ENCODE measurements at regions of chr14 and their contacts with region 1.

Region 1: GRCh38 chr14:96424109-96424989 is 32.4 kb downstream of the AK7 start:
- DNase-seq: peak; percentile 31 to 41
- ATAC-seq: peak; percentile 66 to 87 (median 79)
- H3K4me3 ChIP-seq: peak overlapping the region; percentile 28 to 57 (median 50)
- H3K27ac ChIP-seq: no peak overlapping the region
- H3K4me1 ChIP-seq: peaks cover 0 to 9% (median 5%) of the 10 kb centered on the region in 9 donors
- H3K27me3 ChIP-seq: peaks cover 0 to 8% (median 0%) of the 10 kb centered on the region in 7 donors
- CTCF ChIP-seq: peak; percentile 72 to 86 (median 81)

Region 2: DNA sequence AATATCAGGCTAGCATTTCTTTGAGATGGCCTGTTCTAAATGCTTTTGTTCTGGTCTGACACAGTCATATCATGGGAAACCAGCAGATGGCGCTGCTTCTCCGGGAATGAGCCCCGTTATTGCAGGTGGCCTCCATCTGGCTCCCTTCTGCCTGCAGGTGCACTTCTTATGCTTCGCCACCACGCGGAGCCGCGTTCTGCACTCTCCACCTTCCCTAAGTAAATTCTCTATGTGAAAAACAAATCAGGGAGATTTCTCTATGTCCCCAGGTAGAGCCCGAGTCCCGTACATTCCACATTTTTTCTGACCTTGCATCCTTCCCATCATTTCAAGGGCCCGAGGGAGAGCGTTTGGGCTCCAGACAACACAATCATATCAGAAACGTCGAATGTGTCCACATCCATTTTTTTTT is 863.3 kb before region 1 on chr14:
- intact Hi-C with region 1: loop called in 1 of 10 experiments (anchors 10 kb)
- DNase-seq: peak; percentile 75 to 79
- ATAC-seq: peak; percentile 85 to 90 (median 87)
- H3K4me3 ChIP-seq: no peak overlapping the region
- H3K27ac ChIP-seq: no peak overlapping the region
- H3K4me1 ChIP-seq: peaks cover 0 to 4% (median 0%) of the 10 kb centered on the region in 9 donors
- H3K27me3 ChIP-seq: peaks cover 0 to 6% (median 0%) of the 10 kb centered on the region in 7 donors
- CTCF ChIP-seq: peak; percentile 75 to 94 (median 93)

Region 3: DNA sequence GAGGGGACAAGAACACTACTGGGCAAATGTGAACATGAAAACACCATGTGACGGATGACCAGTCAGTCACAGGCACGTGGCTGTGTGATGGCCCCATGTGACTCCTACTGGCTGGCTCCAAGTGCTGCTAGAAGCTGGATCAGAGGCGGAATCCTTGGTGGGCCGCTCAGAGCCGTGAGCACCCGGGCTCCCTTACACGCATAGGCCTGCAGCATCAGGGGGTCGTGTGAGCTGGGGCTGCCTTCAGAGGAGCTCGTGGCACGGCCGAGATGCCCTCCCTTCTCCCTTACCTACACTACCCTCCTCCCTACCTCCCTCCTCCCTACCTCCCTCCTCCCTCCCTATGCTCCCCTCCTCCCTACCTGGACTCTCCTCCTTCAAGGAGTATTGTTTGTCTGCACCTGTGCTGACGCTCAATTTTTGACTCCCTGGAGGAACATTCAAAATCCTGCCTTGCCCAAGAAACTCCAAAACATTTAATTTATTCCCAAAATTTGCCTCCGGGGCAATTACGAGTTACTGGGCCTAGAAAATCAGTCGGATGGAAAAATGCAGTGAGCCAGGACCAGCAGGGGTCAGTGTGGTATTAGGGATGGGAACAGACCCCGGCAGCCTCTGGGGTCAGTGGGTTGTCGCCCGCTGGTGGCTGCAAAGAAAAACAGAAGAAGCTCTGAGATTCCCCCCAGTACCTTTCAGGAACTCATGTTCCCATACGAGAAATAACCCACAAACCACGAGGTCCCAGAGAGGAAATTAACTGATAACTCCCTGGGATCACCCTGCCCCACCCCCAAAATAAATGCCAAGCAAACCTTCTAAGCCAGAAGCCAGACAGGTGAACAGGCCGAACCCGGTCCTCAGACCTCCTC is 324.0 kb before region 1 on chr14:
- intact Hi-C with region 1: loop called in 6 of 10 experiments (anchors 2 to 10 kb)
- DNase-seq: peak; percentile 54 to 73
- ATAC-seq: peak in 5 of 8 donors; percentile 42 to 76 (median 67)
- H3K4me3 ChIP-seq: no peak overlapping the region
- H3K27ac ChIP-seq: no peak overlapping the region
- H3K4me1 ChIP-seq: peaks cover 0 to 3% (median 0%) of the 10 kb centered on the region in 9 donors
- H3K27me3 ChIP-seq: peaks cover 0 to 32% (median 26%) of the 10 kb centered on the region in 7 donors
- CTCF ChIP-seq: peak; percentile 46 to 91 (median 80)

Region 4: GRCh38 chr14:96297000-96297399 is 127.3 kb before region 1 on chr14:
- intact Hi-C with region 1: loop called in 9 of 10 experiments (anchors 2 to 10 kb)
- DNase-seq: no peak
- ATAC-seq: no peak
- H3K4me3 ChIP-seq: no peak overlapping the region
- H3K27ac ChIP-seq: no peak overlapping the region
- H3K4me1 ChIP-seq: no peaks in the 10 kb centered on the region
- H3K27me3 ChIP-seq: no peaks in the 10 kb centered on the region
- CTCF ChIP-seq: peak; percentile 14 to 68 (median 57)

Region 5: DNA sequence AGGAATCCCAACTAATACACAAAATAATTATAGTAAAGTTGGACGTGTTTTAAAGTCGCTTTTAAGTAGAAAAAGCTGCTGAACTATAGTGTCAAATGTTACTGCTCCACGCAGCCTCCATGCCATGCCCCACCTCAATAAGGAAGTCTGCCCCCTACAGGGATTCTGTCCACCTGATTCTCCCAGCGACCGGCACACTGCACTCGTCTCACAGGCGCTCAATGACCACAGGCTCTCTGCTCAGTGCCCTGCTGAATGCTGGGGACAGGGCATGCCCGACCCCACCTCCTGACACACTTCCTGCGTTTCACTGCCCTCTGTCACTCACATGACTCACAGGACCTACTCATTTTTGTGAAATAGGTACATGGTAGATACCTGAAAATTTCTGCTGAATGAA is 119.4 kb before region 1 on chr14:
- intact Hi-C with region 1: loop called in 2 of 10 experiments (anchors 5 kb)
- DNase-seq: no peak
- ATAC-seq: no peak
- H3K4me3 ChIP-seq: no peak overlapping the region
- H3K27ac ChIP-seq: no peak overlapping the region
- H3K4me1 ChIP-seq: no peaks in the 10 kb centered on the region
- H3K27me3 ChIP-seq: no peaks in the 10 kb centered on the region
- CTCF ChIP-seq: peak in 1 of 9 donors; percentile 15

Region 6: GRCh38 chr14:96362965-96363756 is 61.2 kb before region 1 on chr14 and contains the starts of genes ATG2B and GSKIP:
- intact Hi-C with region 1: loop called in 2 of 10 experiments (anchors 2 to 5 kb)
- DNase-seq: peak; percentile 94 to 97
- ATAC-seq: peak; percentile 99
- H3K4me3 ChIP-seq: peak within 1 kb of the TSS; percentile 78 to 100 (median 96)
- H3K27ac ChIP-seq: peak within 1 kb of the TSS; percentile 20 to 97 (median 92)
- H3K4me1 ChIP-seq: peaks cover 0 to 47% (median 35%) of the 10 kb centered on the region in 9 donors
- H3K27me3 ChIP-seq: no peaks in the 10 kb centered on the region
- CTCF ChIP-seq: no peak
- total RNA-seq, gene ATG2B: 11.0 to 20.2 (median 14.5) TPM
- total RNA-seq, gene GSKIP: 10.2 to 18.8 (median 12.2) TPM

Measured in heart right ventricle (tissue), 16 donors.